WTC11 (cell line): ENCODE measurements at regions of chr3 and their contacts with region 1.

Region 1: GRCh38 chr3:52220380-52221026 is 4.9 kb downstream of the TLR9 start:
- DNase-seq: peak; percentile 92
- ATAC-seq: peak; percentile 84
- H3K4me3 Mint-ChIP-seq: no peak overlapping the region
- H3K27ac Mint-ChIP-seq: no peak overlapping the region
- H3K4me1 Mint-ChIP-seq: peaks cover 7% of the 10 kb centered on the region
- H3K27me3 Mint-ChIP-seq: no peaks in the 10 kb centered on the region
- CTCF ChIP-seq: peak; percentile 95

Region 2: DNA sequence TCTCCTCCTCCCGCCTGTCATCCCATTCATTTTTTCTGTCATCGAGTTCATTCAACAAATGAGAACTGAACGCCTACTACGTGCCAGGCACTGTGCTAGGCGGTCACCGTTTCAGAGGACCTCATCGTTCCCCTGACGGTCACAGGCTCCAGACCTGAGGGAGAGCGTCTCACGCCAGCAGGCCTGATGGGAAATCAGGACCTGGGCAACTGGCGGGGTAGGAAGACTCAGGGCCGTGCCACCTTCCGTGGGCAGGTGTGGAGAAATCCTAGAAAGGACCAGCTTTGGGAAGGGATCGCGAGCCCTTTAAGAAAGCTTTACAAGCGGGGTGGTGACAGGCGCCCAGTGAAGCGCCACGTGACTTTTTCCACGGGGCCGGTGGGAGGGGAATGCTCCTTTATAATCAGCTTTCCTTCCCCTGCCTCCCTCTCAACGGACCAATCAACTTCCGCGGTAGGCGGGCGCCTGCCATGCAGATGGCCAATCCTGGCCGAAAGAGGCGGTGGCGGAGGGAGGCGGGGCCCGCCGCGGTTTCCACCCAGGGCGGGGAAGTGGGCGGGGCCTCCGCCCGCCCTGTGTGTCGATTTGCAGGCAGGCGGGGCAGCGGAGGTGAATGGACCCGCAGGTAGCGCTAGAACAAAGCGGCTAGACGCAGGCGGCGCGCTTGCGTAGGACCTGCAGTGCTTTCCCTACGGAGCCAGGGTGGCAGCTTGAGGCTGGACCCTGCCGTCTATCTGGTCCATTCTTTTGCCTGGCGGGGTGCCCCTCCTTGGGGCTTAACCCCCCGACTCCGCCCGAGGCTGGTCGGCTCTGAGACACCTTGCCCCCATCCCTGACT is 163.3 kb before region 1 on chr3:
- CTCF ChIA-PET with region 1: interaction called, 14 read pairs
- POLR2A ChIA-PET with region 1: no interaction called
- DNase-seq: peak; percentile 99
- ATAC-seq: peak; percentile 77
- H3K4me3 Mint-ChIP-seq: peak overlapping the region; percentile 83
- H3K27ac Mint-ChIP-seq: peak overlapping the region; percentile 94
- H3K4me1 Mint-ChIP-seq: peaks cover 30% of the 10 kb centered on the region
- H3K27me3 Mint-ChIP-seq: peaks cover 21% of the 10 kb centered on the region
- CTCF ChIP-seq: no peak

Region 3: GRCh38 chr3:52080830-52081719 is 139.4 kb before region 1 on chr3:
- CTCF ChIA-PET with region 1: no interaction called
- POLR2A ChIA-PET with region 1: no interaction called
- DNase-seq: no peak
- ATAC-seq: no peak
- H3K4me3 Mint-ChIP-seq: no peak overlapping the region
- H3K27ac Mint-ChIP-seq: no peak overlapping the region
- H3K4me1 Mint-ChIP-seq: no peaks in the 10 kb centered on the region
- H3K27me3 Mint-ChIP-seq: no peaks in the 10 kb centered on the region
- CTCF ChIP-seq: no peak

Region 4: GRCh38 chr3:52159503-52159902 is 61.0 kb before region 1 on chr3:
- CTCF ChIA-PET with region 1: interaction called, 19 read pairs
- POLR2A ChIA-PET with region 1: interaction called, 3 read pairs
- DNase-seq: no peak
- ATAC-seq: no peak
- H3K4me3 Mint-ChIP-seq: no peak overlapping the region
- H3K27ac Mint-ChIP-seq: peak overlapping the region; percentile 3; the same call in 1 of the 2 replicates
- H3K4me1 Mint-ChIP-seq: peaks cover 21% of the 10 kb centered on the region
- H3K27me3 Mint-ChIP-seq: peaks cover under 1% of the 10 kb centered on the region; the same call in 1 of the 2 replicates
- CTCF ChIP-seq: no peak

Region 5: GRCh38 chr3:52238761-52239701 is 18.5 kb after region 1 on chr3 and contains the start of gene TWF2:
- CTCF ChIA-PET with region 1: interaction called, 222 read pairs
- POLR2A ChIA-PET with region 1: interaction called, 3 read pairs
- DNase-seq: peak; percentile 77
- ATAC-seq: peak; percentile 74
- H3K4me3 Mint-ChIP-seq: peak within 1 kb of the TSS; percentile 95
- H3K27ac Mint-ChIP-seq: peak within 1 kb of the TSS; percentile 89
- H3K4me1 Mint-ChIP-seq: peaks cover 43% of the 10 kb centered on the region
- H3K27me3 Mint-ChIP-seq: peaks cover 16% of the 10 kb centered on the region
- CTCF ChIP-seq: no peak
- total RNA-seq, gene TWF2: 60.8 to 71.1 TPM (median 66.3 TPM) in 3 replicates

Region 6: GRCh38 chr3:52278510-52279069 is 58.1 kb after region 1 on chr3 and contains the start of gene WDR82:
- CTCF ChIA-PET with region 1: interaction called, 34 read pairs
- POLR2A ChIA-PET with region 1: interaction called, 7 read pairs
- DNase-seq: peak; percentile 98
- ATAC-seq: peak; percentile 93
- H3K4me3 Mint-ChIP-seq: peak within 1 kb of the TSS; percentile 94
- H3K27ac Mint-ChIP-seq: peak within 1 kb of the TSS; percentile 100
- H3K4me1 Mint-ChIP-seq: peaks cover 34% of the 10 kb centered on the region
- H3K27me3 Mint-ChIP-seq: no peaks in the 10 kb centered on the region
- CTCF ChIP-seq: 0 out of 2 replicates have a peak, but pooled peaks have one; percentile 32
- total RNA-seq, gene WDR82: 64.6 to 69.7 TPM (median 64.9 TPM) in 3 replicates

Region 7: GRCh38 chr3:52339612-52340011 is 119.1 kb after region 1 on chr3:
- CTCF ChIA-PET with region 1: interaction called, 83 read pairs
- POLR2A ChIA-PET with region 1: no interaction called
- DNase-seq: peak; percentile 35
- ATAC-seq: peak; percentile 58
- H3K4me3 Mint-ChIP-seq: no peak overlapping the region
- H3K27ac Mint-ChIP-seq: no peak overlapping the region
- H3K4me1 Mint-ChIP-seq: no peaks in the 10 kb centered on the region
- H3K27me3 Mint-ChIP-seq: no peaks in the 10 kb centered on the region; the same call in 1 of the 2 replicates
- CTCF ChIP-seq: peak; percentile 67

Region 8: GRCh38 chr3:52444860-52445793 is 224.6 kb after region 1 on chr3 and contains the start of gene SEMA3G:
- CTCF ChIA-PET with region 1: interaction called, 13 read pairs
- POLR2A ChIA-PET with region 1: no interaction called
- DNase-seq: peak; percentile 83
- ATAC-seq: peak; percentile 88
- H3K4me3 Mint-ChIP-seq: peak within 1 kb of the TSS; percentile 16; the same call in 1 of the 2 replicates
- H3K27ac Mint-ChIP-seq: no peak within 1 kb of the TSS
- H3K4me1 Mint-ChIP-seq: peaks cover 11% of the 10 kb centered on the region; the same call in 1 of the 2 replicates
- H3K27me3 Mint-ChIP-seq: no peaks in the 10 kb centered on the region; the same call in 1 of the 2 replicates
- CTCF ChIP-seq: no peak
- total RNA-seq, gene SEMA3G: 1.6 to 2.5 TPM (median 2.5 TPM) in 3 replicates

Region 9: GRCh38 chr3:52481819-52482521 is 261.5 kb after region 1 on chr3:
- CTCF ChIA-PET with region 1: no interaction called
- POLR2A ChIA-PET with region 1: no interaction called
- DNase-seq: peak; percentile 89
- ATAC-seq: peak; percentile 87
- H3K4me3 Mint-ChIP-seq: no peak overlapping the region
- H3K27ac Mint-ChIP-seq: peak overlapping the region; percentile 82
- H3K4me1 Mint-ChIP-seq: no peaks in the 10 kb centered on the region
- H3K27me3 Mint-ChIP-seq: no peaks in the 10 kb centered on the region
- CTCF ChIP-seq: peak; percentile 93

Region 10: DNA sequence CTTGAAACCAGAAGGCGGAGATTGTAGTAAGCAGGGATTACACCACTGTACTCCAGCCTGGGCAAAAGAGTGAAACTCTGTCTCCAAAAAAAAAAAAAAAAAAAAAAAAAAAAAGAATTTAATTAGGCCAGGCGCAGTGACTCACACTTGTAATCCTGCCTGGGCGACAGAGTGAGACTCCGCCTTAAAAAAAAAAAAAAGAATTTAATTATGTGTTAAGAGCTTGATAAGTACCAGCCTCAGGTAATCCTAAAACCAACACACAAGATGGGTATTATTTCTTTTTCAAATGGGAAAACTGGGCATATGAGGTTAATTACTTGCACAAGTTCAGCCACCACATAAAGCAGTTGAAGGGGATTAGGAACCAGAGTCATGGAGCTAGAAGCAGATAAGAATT is 416.2 kb after region 1 on chr3:
- CTCF ChIA-PET with region 1: no interaction called
- POLR2A ChIA-PET with region 1: no interaction called
- DNase-seq: no peak
- ATAC-seq: no peak
- H3K4me3 Mint-ChIP-seq: no peak overlapping the region
- H3K27ac Mint-ChIP-seq: no peak overlapping the region
- H3K4me1 Mint-ChIP-seq: no peaks in the 10 kb centered on the region
- H3K27me3 Mint-ChIP-seq: no peaks in the 10 kb centered on the region
- CTCF ChIP-seq: no peak